ENCODE measurements at regions of chr6 and their contacts with region 1.

Region 1: GRCh38 chr6:30781743-30782424 is 37.5 kb upstream of the IER3 start:
- DNase-seq: peak; percentile 81
- H3K4me3 ChIP-seq: no peak overlapping the region
- H3K27ac ChIP-seq: peak overlapping the region; percentile 79 to 80
- H3K4me1 ChIP-seq: peaks cover 21% of the 10 kb centered on the region
- H3K27me3 ChIP-seq: no peaks in the 10 kb centered on the region
- CTCF ChIP-seq: no peak
- POLR2A ChIP-seq: peak; percentile 12

Region 2: GRCh38 chr6:30742316-30743098 is 39.4 kb before region 1 on chr6 and contains the start of gene FLOT1:
- intact Hi-C with region 1: loop called (anchors 5 kb)
- DNase-seq: peak; percentile 98
- H3K4me3 ChIP-seq: peak within 1 kb of the TSS; percentile 76 to 79
- H3K27ac ChIP-seq: peak within 1 kb of the TSS; percentile 95
- H3K4me1 ChIP-seq: no peaks in the 10 kb centered on the region
- H3K27me3 ChIP-seq: no peaks in the 10 kb centered on the region
- CTCF ChIP-seq: peak in 1 of 4 experiments; percentile 10
- POLR2A ChIP-seq: peak; percentile 82
- total RNA-seq, gene FLOT1: 117 to 133 TPM

Region 3: GRCh38 chr6:30752157-30752927 is 29.5 kb before region 1 on chr6:
- intact Hi-C with region 1: loop called (anchors 2 kb)
- DNase-seq: peak; percentile 94
- H3K4me3 ChIP-seq: no peak overlapping the region
- H3K27ac ChIP-seq: peak overlapping the region; percentile 57 to 82
- H3K4me1 ChIP-seq: no peaks in the 10 kb centered on the region
- H3K27me3 ChIP-seq: no peaks in the 10 kb centered on the region
- CTCF ChIP-seq: no peak
- POLR2A ChIP-seq: peak; percentile 32

Measured in prostate gland (tissue), 2 donors.